ENCODE measurements at regions of chr3 and their contacts with region 1.

Region 1: GRCh38 chr3:38136777-38137614 is at the start of gene ACAA1:
- DNase-seq: peak; percentile 97 to 100 (median 99)
- ATAC-seq: peak; percentile 93
- H3K4me3 ChIP-seq: peak within 1 kb of the TSS; percentile 89 to 97
- H3K27ac ChIP-seq: peak within 1 kb of the TSS; percentile 96 to 98
- H3K4me1 ChIP-seq: peaks cover 34 to 71% of the 10 kb centered on the region in 2 donors
- H3K27me3 ChIP-seq: no peaks in the 10 kb centered on the region
- CTCF ChIP-seq: peak in 1 of 2 donors; percentile 17
- polyA plus RNA-seq, gene ACAA1: 54.3 to 61.8 (median 58.6) TPM

Region 2: DNA sequence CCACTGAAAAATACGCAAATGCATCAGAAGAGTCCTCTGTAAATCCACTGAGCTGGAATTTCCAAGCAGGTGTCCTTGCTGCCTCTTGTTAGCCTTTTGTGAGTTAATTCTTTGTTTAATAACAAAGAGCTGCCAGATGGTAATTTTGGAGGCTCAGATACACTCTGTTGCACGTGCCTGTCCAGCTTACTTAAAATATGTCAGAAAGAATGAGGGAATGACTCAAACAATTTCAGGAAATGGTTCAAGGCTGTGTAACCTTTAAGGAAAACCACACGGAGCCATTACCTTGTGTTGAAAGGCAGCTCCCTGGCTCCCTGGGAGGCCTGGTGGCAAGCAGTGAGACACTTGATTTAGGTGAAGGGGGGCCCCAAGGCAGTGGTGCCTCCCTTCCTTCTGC is 577.5 kb before region 1 on chr3:
- intact Hi-C with region 1: no loop called
- DNase-seq: no peak
- ATAC-seq: no peak
- H3K4me3 ChIP-seq: no peak overlapping the region
- H3K27ac ChIP-seq: no peak overlapping the region
- H3K4me1 ChIP-seq: peaks cover 0 to 21% of the 10 kb centered on the region in 2 donors
- H3K27me3 ChIP-seq: no peaks in the 10 kb centered on the region
- CTCF ChIP-seq: no peak

Region 3: DNA sequence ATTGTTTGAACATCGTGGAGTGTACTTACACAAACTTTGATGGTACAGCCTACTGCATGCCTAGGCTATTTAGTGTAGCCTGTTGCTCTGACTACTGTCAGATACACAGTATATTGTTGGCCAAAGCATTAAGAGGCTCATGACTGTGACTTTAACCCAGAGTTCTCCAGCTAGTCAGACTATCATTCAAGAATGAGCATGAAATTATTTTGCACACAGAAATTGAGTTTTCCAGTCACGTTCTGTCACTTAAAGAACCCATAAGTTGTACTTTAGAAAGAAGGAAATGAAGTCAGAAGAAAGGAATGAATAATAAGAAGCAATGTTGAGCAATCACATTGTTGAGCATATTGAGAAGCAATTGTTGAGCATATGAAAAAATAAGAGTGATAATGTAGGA is 91.0 kb after region 1 on chr3:
- intact Hi-C with region 1: loop called in 1 of 2 experiments (anchors 10 kb)
- DNase-seq: peak in 2 of 4 donors; percentile 10 to 24
- ATAC-seq: peak; percentile 93
- H3K4me3 ChIP-seq: no peak overlapping the region
- H3K27ac ChIP-seq: peak overlapping the region; percentile 37 to 69
- H3K4me1 ChIP-seq: peaks cover 0 to 14% of the 10 kb centered on the region in 2 donors
- H3K27me3 ChIP-seq: no peaks in the 10 kb centered on the region
- CTCF ChIP-seq: no peak

Region 4: DNA sequence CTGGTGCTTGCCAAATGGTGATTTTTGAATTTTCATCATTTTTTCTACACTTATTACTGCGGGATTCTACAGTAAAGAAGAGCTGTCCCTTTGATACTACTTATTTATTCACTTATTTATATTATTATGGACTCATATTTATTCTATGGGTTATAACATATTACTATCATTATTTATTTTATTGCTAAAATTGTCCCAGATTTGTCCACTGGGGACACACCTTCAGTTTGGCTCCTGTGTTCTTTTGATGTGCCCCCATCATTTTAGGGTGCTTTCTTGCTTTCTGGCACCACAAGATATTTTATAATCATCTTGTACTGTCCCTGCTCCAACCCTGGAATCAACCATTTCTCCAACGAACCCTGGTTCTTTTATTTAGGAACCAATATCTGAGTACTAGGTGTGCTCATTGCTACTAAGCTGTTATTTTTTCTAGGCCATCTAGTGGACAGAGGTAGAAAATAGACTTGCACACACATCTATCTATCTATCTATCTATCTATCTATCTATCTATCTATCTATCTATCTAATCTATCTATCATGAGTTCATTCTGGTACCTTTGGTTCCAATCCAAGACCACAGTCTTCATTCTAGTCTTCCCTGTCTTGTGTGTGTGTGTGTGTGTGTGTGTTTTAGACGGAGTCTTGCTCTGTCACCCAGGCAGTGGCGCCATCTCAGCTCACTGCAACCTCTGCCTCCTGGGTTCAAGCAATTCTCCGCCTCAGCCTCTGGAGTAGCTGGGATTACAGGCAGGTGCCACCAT is 161.1 kb after region 1 on chr3:
- intact Hi-C with region 1: no loop called
- DNase-seq: no peak
- ATAC-seq: no peak
- H3K4me3 ChIP-seq: no peak overlapping the region
- H3K27ac ChIP-seq: no peak overlapping the region
- H3K4me1 ChIP-seq: no peaks in the 10 kb centered on the region
- H3K27me3 ChIP-seq: no peaks in the 10 kb centered on the region
- CTCF ChIP-seq: peak in 1 of 2 donors; percentile 36